ENCODE measurements at regions of chr17 and their contacts with region 1.

Region 1: DNA sequence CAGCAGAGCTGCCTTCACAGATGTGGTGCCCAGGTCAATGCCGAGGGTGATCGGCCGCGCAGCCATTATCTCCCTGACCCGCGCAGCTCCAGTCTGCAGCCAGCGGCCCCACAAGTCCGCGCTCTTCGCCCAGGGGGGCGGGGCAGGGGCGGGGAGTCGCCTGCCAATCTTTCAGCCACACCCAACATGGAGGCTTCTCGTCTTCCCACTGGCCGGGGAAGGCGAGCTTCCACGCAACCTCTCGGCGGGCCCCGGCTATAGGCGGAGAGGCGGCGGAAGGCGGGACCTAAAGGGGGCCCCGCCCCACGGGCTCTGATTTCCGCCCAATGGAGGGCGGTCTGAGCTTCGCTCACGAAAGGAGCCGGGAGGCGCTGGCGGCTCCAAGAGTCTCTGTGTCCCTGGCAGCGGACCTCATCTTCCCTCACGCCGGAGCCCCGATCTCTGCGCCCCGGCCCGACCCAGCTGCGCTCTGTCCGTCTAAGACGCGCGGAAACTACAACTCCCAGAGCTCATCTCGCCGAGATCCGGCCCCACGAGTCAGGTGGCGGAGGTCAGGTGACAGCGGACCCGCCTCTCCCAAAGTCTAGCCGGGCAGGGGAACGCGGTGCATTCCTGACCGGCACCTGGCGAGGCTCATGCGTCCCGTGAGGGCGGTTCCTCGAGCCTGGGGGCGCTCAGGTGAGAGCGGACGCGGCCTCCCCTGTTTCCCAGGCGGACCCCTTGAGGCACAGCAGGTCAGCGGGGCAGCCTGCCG is at the starts of genes CTNS and SHPK:
- DNase-seq: peak; percentile 100
- CTCF ChIP-seq: no peak

Region 2: DNA sequence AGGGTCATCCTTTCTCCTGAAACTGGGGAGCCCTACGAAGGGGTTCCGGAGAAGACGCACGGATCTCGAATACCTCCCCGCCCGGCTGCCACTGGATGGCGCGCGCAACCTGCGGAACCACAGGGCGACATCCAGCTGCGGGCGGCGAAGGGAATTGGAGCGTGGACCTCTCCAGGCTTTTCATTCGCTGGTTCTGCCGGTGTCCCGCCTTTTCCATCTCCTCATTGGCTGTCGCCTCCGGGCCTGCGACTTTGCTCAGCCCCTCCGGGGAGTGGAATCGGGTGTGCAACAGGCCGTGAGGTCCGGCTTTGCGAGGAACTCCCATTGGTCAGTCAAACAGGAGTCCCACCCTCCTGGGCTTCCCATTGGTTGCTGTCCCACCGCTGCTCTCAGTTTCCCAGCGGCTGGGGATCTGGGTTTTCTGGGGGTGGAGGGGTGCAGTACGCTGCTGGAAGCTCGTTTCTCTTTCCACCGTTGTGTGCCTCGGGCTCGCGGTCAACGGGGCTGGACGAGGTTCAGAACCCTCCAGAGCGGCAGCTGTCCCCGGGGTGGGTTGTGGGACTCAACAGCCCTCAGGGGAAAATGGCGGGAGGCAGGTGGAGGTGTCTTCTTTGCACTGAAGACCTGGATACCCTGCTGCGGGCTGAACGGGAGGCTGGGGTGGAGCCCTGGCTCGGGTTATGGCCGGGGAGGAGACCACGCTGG is 587.4 kb before region 1 on chr17:
- in situ Hi-C with region 1: loop called (anchors 25 kb)
- DNase-seq: peak; percentile 84
- CTCF ChIP-seq: peak; percentile 61

Region 3: GRCh38 chr17:3512505-3513171 is 123.7 kb before region 1 on chr17:
- in situ Hi-C with region 1: no loop called
- DNase-seq: no peak
- CTCF ChIP-seq: no peak

Region 4: DNA sequence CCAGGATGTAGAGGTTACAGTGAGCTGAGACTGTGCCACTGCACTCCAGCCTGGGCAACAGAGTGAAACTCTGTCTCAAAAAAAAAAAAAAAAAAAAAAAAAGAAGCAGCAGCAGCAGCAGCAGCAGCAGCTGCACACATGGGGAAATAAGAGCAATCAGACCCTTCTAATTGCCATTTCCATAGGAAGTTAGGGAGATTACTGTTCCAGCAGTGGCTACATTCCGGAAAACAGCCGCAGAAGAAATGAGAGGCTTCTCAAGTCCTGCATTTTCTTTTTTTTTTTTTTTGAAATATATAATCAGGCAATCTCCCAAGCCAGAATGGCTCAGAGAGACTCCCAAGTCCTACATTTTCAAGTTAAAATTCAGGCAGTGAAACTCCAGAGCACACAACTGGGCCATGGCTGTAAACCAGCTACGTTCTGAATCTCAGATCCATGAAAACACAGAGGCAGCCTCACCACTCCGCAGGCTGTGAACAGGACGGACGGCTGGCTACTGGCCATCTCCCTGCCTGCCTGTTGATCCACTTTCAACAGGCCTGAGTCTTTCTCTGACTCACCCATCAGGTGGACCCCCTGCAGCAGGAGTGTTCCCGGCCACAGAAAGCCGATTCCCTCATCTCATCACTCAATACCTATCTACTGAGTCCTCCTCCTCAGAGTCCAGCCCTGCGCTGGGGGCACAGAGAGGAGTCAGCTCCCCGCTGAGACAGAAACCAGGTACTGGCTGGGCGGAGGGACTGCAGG is 42.1 kb before region 1 on chr17:
- in situ Hi-C with region 1: loop called (anchors 5 kb)
- DNase-seq: no peak
- CTCF ChIP-seq: no peak

Measured in GM13976 (cell line).